ENCODE measurements at regions of chr7 and their contacts with region 1.

Region 1: GRCh38 chr7:77798394-77799077 is at the starts of genes PHTF2 and TMEM60:
- DNase-seq: peak; percentile 96
- H3K4me3 Mint-ChIP-seq: peak within 1 kb of the TSS; percentile 91
- H3K27ac Mint-ChIP-seq: peak within 1 kb of the TSS; percentile 92
- H3K4me1 Mint-ChIP-seq: peaks cover 68% of the 10 kb centered on the region
- H3K27me3 Mint-ChIP-seq: no peaks in the 10 kb centered on the region
- total RNA-seq, gene PHTF2: 40.8 to 41.2 TPM
- total RNA-seq, gene TMEM60: 14.2 to 15.5 TPM

Region 2: GRCh38 chr7:77696198-77697028 is 102.1 kb before region 1 on chr7 and contains the start of gene RSBN1L:
- CTCF ChIA-PET with region 1: interaction called, 4 read pairs
- POLR2A ChIA-PET with region 1: interaction called, 7 read pairs
- intact Hi-C with region 1: loop called (anchors 1 kb)
- DNase-seq: peak; percentile 99
- H3K4me3 Mint-ChIP-seq: peak within 1 kb of the TSS; percentile 89
- H3K27ac Mint-ChIP-seq: peak within 1 kb of the TSS; percentile 95
- H3K4me1 Mint-ChIP-seq: peaks cover 51% of the 10 kb centered on the region
- H3K27me3 Mint-ChIP-seq: no peaks in the 10 kb centered on the region
- total RNA-seq, gene RSBN1L: 18.5 to 21.1 TPM

Region 3: GRCh38 chr7:77812290-77812685 is 13.8 kb after region 1 on chr7:
- CTCF ChIA-PET with region 1: interaction called, 11 read pairs
- POLR2A ChIA-PET with region 1: interaction called, 3 read pairs
- intact Hi-C with region 1: no loop called
- DNase-seq: no peak
- H3K4me3 Mint-ChIP-seq: no peak overlapping the region
- H3K27ac Mint-ChIP-seq: no peak overlapping the region
- H3K4me1 Mint-ChIP-seq: peaks cover 49% of the 10 kb centered on the region
- H3K27me3 Mint-ChIP-seq: no peaks in the 10 kb centered on the region

Region 4: GRCh38 chr7:77887567-77887966 is 89.0 kb after region 1 on chr7:
- CTCF ChIA-PET with region 1: interaction called, 4 read pairs
- POLR2A ChIA-PET with region 1: interaction called, 3 read pairs
- intact Hi-C with region 1: loop called (anchors 5 kb)
- DNase-seq: peak; percentile 49
- H3K4me3 Mint-ChIP-seq: no peak overlapping the region
- H3K27ac Mint-ChIP-seq: no peak overlapping the region
- H3K4me1 Mint-ChIP-seq: peaks cover 34% of the 10 kb centered on the region
- H3K27me3 Mint-ChIP-seq: no peaks in the 10 kb centered on the region

Region 5: GRCh38 chr7:77923419-77923818 is 124.9 kb after region 1 on chr7:
- CTCF ChIA-PET with region 1: interaction called, 3 read pairs
- POLR2A ChIA-PET with region 1: no interaction called
- intact Hi-C with region 1: loop called (anchors 5 kb)
- DNase-seq: no peak
- H3K4me3 Mint-ChIP-seq: no peak overlapping the region
- H3K27ac Mint-ChIP-seq: no peak overlapping the region
- H3K4me1 Mint-ChIP-seq: peaks cover 5% of the 10 kb centered on the region
- H3K27me3 Mint-ChIP-seq: no peaks in the 10 kb centered on the region

Region 6: DNA sequence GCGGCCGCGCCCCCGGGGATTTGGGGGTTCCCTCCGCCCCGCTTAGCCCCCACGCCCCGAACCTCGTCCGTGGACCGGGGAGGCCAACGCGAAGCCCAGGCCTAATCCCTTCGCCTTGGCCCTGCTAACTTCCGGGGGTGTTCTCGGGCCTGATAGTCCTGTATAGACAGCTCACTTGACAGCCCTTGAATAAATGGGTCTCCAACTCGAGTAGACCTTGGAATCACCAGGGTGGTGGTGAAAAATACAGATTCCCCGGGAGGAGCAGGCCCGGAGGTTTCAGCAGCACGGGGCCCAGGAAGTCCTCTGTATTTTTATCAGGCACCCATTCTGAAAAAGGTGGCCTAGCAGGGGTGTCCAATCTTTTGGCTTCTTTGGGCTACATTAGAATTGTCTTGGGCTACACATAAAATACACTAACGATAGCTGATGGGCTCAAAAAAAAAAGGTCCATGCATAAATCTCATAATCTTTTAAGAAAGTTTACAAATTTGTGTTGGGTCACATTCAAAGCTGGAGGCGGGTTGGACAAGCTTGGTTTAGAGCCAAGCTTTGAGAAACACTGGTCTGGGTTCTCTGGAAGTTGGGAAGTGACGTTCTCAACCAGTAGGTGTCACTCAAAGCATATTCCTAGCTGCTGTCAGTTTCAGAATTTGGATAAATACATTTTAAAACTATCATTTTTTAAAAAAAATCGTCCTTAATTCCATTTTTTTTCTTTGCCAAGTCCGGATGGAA is 221.8 kb after region 1 on chr7:
- CTCF ChIA-PET with region 1: interaction called, 5 read pairs
- POLR2A ChIA-PET with region 1: no interaction called
- intact Hi-C with region 1: loop called (anchors 2 kb)
- DNase-seq: peak; percentile 42
- H3K4me3 Mint-ChIP-seq: peak overlapping the region; percentile 67
- H3K27ac Mint-ChIP-seq: peak overlapping the region; percentile 40
- H3K4me1 Mint-ChIP-seq: peaks cover 13% of the 10 kb centered on the region
- H3K27me3 Mint-ChIP-seq: peaks cover 13% of the 10 kb centered on the region

Measured in activated CD4-positive, alpha-beta memory T cell treated with anti-CD3 and anti-CD28 coated beads for 36 hours (primary cell).